Activated T-helper 1 cell treated with anti-CD3 and anti-CD28 coated beads, Interleukin-12 subunit alpha, Interleukin-12 subunit beta, Interleukin-2, Interleukin-4 antibody, amounts not matched to agents 30 ng/mL and 10 ng/mL and 1 ng/mL, durations not matched to agents 14 hours and 24 hours and 36 hours (primary cell): ENCODE measurements at regions of chr17 and their contacts with region 1.

Region 1: GRCh38 chr17:41665566-41666236 is 23.0 kb upstream of the EIF1 start:
- DNase-seq: peak; percentile 88
- H3K4me3 Mint-ChIP-seq: peak overlapping the region; percentile 81
- H3K27ac Mint-ChIP-seq: peak overlapping the region; percentile 98
- H3K4me1 Mint-ChIP-seq: peaks cover 60% of the 10 kb centered on the region
- H3K27me3 Mint-ChIP-seq: peaks cover 8% of the 10 kb centered on the region

Region 2: GRCh38 chr17:40542558-40543411 is 1122.9 kb before region 1 on chr17:
- intact Hi-C with region 1: loop called (anchors 5 kb)
- DNase-seq: no peak
- H3K4me3 Mint-ChIP-seq: peak overlapping the region; percentile 69
- H3K27ac Mint-ChIP-seq: peak overlapping the region; percentile 88
- H3K4me1 Mint-ChIP-seq: peaks cover 75% of the 10 kb centered on the region
- H3K27me3 Mint-ChIP-seq: peaks cover 10% of the 10 kb centered on the region

Region 3: GRCh38 chr17:40818733-40819527 is 846.8 kb before region 1 on chr17:
- intact Hi-C with region 1: loop called (anchors 5 kb)
- DNase-seq: peak; percentile 85
- H3K4me3 Mint-ChIP-seq: peak overlapping the region; percentile 96
- H3K27ac Mint-ChIP-seq: peak overlapping the region; percentile 88
- H3K4me1 Mint-ChIP-seq: peaks cover 31% of the 10 kb centered on the region
- H3K27me3 Mint-ChIP-seq: peaks cover 11% of the 10 kb centered on the region

Region 4: GRCh38 chr17:41338961-41339485 is 326.7 kb before region 1 on chr17:
- intact Hi-C with region 1: loop called (anchors 5 kb)
- DNase-seq: peak; percentile 36
- H3K4me3 Mint-ChIP-seq: peak overlapping the region; percentile 43
- H3K27ac Mint-ChIP-seq: peak overlapping the region; percentile 52
- H3K4me1 Mint-ChIP-seq: peaks cover 52% of the 10 kb centered on the region
- H3K27me3 Mint-ChIP-seq: peaks cover 16% of the 10 kb centered on the region

Region 5: GRCh38 chr17:41548844-41549595 is 116.7 kb before region 1 on chr17:
- intact Hi-C with region 1: loop called (anchors 1 kb)
- DNase-seq: peak; percentile 74
- H3K4me3 Mint-ChIP-seq: no peak overlapping the region
- H3K27ac Mint-ChIP-seq: peak overlapping the region; percentile 31
- H3K4me1 Mint-ChIP-seq: peaks cover 21% of the 10 kb centered on the region
- H3K27me3 Mint-ChIP-seq: peaks cover 10% of the 10 kb centered on the region

Region 6: GRCh38 chr17:41678907-41679739 is 13.4 kb after region 1 on chr17:
- intact Hi-C with region 1: loop called (anchors 1 kb)
- DNase-seq: peak; percentile 75
- H3K4me3 Mint-ChIP-seq: peak overlapping the region; percentile 86
- H3K27ac Mint-ChIP-seq: peak overlapping the region; percentile 99
- H3K4me1 Mint-ChIP-seq: peaks cover 59% of the 10 kb centered on the region
- H3K27me3 Mint-ChIP-seq: no peaks in the 10 kb centered on the region